Naive thymus-derived CD4-positive, alpha-beta T cell (primary cell): ENCODE measurements at regions of chr2 and their contacts with region 1.

Region 1: GRCh38 chr2:239401067-239401880 is 454 bp upstream of the HDAC4 start:
- DNase-seq: peak; percentile 98 to 100 (median 100)
- ATAC-seq: peak; percentile 92
- H3K4me3 ChIP-seq: peak overlapping the region; percentile 100
- H3K4me3 Mint-ChIP-seq: peak overlapping the region; percentile 86 to 96 (median 92)
- H3K27ac ChIP-seq: peak overlapping the region; percentile 97
- H3K27ac Mint-ChIP-seq: peak overlapping the region; percentile 96 to 99 (median 99)
- H3K4me1 ChIP-seq: peaks cover 17 to 26% of the 10 kb centered on the region in 2 donors
- H3K4me1 Mint-ChIP-seq: peaks cover 28 to 51% (median 43%) of the 10 kb centered on the region in 7 donors
- H3K27me3 ChIP-seq: no peaks in the 10 kb centered on the region
- H3K27me3 Mint-ChIP-seq: peaks cover 0 to 16% (median 0%) of the 10 kb centered on the region in 5 donors

Region 2: DNA sequence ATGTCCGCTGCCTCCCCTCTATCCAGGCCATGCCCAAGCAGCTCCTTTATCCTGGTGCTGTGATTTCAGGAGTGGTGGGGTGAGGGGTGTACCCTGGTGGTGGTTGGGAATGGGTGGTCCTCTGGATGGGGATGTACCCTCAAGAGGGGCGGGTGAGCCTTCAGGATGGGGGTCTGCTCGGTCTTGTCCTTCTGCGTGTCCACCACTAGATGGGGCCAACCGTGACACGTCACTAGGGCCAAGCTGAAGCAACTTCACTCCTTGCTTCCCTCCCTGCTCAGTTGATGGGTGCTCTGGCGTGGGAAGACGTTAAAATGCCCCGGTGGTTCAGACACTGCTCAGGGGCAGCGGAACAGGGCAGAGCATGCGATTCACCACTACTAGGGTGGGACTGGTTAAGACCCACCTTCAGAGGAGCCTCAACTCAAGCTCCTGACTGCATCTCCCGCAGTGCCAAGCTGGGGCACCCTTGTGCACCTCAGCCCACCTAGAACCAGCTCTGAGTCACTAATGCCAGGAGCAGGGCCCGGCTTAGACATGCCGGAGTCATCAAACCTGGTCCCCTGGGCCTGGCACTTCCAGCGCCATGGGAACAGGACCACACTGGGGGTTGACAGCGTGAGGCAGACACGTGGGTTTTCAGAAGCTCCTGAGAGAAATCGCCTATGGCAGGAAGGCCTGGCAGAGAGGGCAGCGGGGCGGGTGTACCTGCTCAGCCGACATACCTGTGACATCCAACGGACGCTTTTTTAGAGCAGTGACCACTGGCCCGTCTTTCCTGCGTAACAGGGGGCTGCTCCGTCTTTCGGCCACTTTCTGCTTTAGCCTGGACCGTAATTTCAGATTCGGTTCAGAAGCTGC is 257.2 kb before region 1 on chr2:
- CTCF ChIA-PET with region 1: interaction called, 5 read pairs
- POLR2A ChIA-PET with region 1: no interaction called
- intact Hi-C with region 1: loop called (anchors 1 to 10 kb)
- DNase-seq: peak in 6 of 9 donors; percentile 16 to 47 (median 40)
- ATAC-seq: peak; percentile 63
- H3K4me3 ChIP-seq: no peak overlapping the region
- H3K4me3 Mint-ChIP-seq: no peak overlapping the region
- H3K27ac ChIP-seq: no peak overlapping the region
- H3K27ac Mint-ChIP-seq: peak overlapping the region in 3 of 9 donors; percentile 25 to 41 (median 33)
- H3K4me1 ChIP-seq: no peaks in the 10 kb centered on the region
- H3K4me1 Mint-ChIP-seq: peaks cover 0 to 18% (median 3%) of the 10 kb centered on the region in 7 donors
- H3K27me3 ChIP-seq: no peaks in the 10 kb centered on the region
- H3K27me3 Mint-ChIP-seq: no peaks in the 10 kb centered on the region

Region 3: DNA sequence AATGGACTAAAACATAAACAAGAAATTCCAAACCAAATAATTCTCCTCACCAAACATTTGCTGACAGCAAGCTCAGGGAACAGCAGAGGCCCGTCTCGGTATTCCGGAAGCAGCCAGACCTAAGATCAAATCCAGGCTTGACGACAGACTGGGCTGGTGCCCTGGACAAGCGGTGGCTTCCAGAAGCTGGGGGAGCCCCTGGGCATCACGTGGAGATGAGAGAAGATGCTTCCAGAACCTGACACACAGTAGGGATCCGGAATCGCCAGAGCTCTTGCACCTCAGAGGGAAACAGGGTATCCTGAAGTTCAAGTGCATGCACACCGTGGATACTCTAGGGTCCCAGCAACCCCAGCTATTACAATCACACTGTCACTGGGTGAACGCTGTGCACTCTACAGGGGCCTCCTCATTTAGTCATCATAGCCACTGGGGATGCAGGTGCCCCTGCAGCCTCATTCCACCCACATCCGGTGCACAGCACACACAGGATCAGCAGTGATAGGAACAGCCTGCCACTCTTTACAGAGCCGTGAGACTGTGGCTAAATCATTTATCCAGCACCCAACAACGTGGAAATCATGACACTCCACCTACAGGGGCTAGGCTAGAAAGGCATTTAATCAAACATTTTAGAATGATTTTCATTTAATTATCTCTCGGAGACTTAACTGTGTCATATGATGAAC is 103.0 kb before region 1 on chr2:
- CTCF ChIA-PET with region 1: interaction called, 7 read pairs
- POLR2A ChIA-PET with region 1: interaction called, 17 read pairs
- intact Hi-C with region 1: loop called (anchors 1 kb)
- DNase-seq: peak in 8 of 9 donors; percentile 67 to 88 (median 84)
- ATAC-seq: peak; percentile 85
- H3K4me3 ChIP-seq: peak overlapping the region; percentile 66
- H3K4me3 Mint-ChIP-seq: peak overlapping the region; percentile 79 to 94 (median 90)
- H3K27ac ChIP-seq: peak overlapping the region; percentile 77
- H3K27ac Mint-ChIP-seq: peak overlapping the region; percentile 89 to 97 (median 93)
- H3K4me1 ChIP-seq: peaks cover 34 to 64% of the 10 kb centered on the region in 2 donors
- H3K4me1 Mint-ChIP-seq: peaks cover 30 to 95% (median 77%) of the 10 kb centered on the region in 7 donors
- H3K27me3 ChIP-seq: no peaks in the 10 kb centered on the region
- H3K27me3 Mint-ChIP-seq: no peaks in the 10 kb centered on the region

Region 4: DNA sequence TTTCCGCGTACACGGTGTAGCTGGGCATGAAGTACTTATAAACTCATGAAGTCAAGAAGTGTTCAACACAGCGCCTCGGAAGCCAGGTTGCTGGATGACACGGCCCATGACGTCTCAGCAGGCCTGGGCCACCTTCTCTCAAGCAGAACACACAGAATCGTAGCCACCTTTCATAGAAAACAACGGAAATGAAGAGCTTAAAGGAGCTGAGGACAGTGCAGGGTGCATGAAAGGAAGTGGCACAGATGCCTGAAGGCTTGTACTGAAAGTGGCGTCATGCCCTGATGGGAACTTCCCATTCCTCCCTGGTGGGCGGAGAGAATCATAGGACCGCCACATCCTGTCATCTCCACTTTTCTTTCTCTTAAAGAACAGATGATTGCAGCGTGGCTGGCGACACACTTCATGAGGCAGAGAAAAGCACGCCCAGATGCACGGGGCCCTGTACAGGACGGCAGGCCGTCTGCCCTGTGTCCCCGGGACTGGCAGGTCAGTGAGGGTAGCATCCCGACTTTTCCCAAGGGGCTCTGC is 31.6 kb before region 1 on chr2:
- CTCF ChIA-PET with region 1: interaction called, 5 read pairs
- POLR2A ChIA-PET with region 1: interaction called, 10 read pairs
- intact Hi-C with region 1: loop called (anchors 1 kb)
- DNase-seq: peak; percentile 39 to 95 (median 92)
- ATAC-seq: peak; percentile 96
- H3K4me3 ChIP-seq: peak overlapping the region; percentile 46
- H3K4me3 Mint-ChIP-seq: peak overlapping the region in 4 of 10 donors; percentile 81 to 87 (median 84)
- H3K27ac ChIP-seq: peak overlapping the region; percentile 96
- H3K27ac Mint-ChIP-seq: no peak overlapping the region
- H3K4me1 ChIP-seq: peaks cover 11 to 41% of the 10 kb centered on the region in 2 donors
- H3K4me1 Mint-ChIP-seq: peaks cover 0 to 22% (median 10%) of the 10 kb centered on the region in 7 donors
- H3K27me3 ChIP-seq: no peaks in the 10 kb centered on the region
- H3K27me3 Mint-ChIP-seq: no peaks in the 10 kb centered on the region

Region 5: DNA sequence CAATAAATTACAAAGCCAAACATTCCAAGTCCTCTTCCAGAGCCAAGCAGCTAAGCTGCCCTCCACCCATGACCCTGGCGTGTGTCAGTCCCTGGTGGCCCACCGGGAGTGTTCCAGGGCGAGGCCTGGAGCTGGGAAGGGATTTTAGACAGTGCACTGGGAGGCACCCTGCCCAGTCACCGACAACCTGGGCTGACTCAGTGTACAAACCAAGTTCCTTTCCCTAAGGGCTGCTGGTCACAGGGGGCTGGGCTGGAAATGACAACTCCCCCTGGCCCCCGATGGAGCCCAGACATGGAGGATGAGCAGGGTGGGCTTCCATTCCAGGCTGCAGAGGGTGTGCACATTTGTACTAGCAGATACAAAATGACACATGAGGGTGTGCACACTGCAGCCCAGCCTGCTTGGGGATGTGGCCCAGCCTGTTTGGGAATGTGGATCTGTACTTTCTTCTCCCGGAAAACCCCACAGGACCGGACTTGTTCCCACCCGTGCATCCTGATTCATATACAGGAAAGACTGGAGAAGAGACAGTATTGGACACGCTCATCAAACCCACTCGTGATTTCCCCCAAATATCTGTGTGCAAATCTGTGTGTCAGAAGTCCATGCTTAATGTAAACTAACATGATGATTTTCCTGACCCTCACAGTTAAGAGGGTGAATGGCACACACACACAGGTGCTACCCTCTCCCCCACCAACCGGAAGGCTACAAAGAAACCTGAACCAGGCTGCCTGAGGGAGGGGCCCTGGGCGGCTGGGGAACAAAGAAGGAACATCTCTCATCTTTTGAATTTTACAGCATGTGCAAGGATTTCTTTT is 565.0 kb after region 1 on chr2:
- CTCF ChIA-PET with region 1: no interaction called
- POLR2A ChIA-PET with region 1: no interaction called
- intact Hi-C with region 1: no loop called
- DNase-seq: no peak
- ATAC-seq: no peak
- H3K4me3 ChIP-seq: no peak overlapping the region
- H3K4me3 Mint-ChIP-seq: no peak overlapping the region
- H3K27ac ChIP-seq: no peak overlapping the region
- H3K27ac Mint-ChIP-seq: no peak overlapping the region
- H3K4me1 ChIP-seq: no peaks in the 10 kb centered on the region
- H3K4me1 Mint-ChIP-seq: peaks cover 0 to 19% (median 0%) of the 10 kb centered on the region in 7 donors
- H3K27me3 ChIP-seq: no peaks in the 10 kb centered on the region
- H3K27me3 Mint-ChIP-seq: no peaks in the 10 kb centered on the region

Region 6: DNA sequence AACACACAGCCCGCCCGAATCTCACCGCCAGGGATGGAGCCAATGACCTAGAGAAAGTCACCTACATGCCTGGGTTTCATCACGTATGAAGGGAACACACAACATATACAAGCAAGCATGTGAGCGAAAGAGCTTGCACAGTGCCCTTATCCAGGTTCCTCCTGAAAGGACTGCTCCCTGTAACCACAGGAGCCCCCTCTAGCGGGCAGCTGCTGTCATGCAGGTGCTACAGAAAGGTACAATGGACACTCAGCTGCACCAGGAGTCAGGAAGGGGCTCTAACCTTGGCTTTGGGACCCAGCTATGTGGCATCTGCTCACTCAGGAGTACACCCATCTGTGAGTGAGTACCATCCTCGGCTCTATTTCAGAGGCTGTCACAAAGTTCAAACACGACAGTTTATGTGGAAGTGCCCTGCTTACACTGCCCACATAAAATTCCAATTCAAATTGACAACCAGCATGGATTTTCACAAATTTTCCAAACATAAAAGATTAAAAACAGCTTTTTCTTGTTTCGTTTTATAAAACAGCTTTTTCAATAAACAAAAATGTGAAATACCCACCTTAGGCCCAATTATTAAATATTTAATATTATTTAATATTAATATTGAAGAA is 620.3 kb after region 1 on chr2:
- CTCF ChIA-PET with region 1: no interaction called
- POLR2A ChIA-PET with region 1: no interaction called
- intact Hi-C with region 1: loop called (anchors 1 kb)
- DNase-seq: peak; percentile 18 to 68 (median 51)
- ATAC-seq: peak; percentile 43
- H3K4me3 ChIP-seq: no peak overlapping the region
- H3K4me3 Mint-ChIP-seq: no peak overlapping the region
- H3K27ac ChIP-seq: no peak overlapping the region
- H3K27ac Mint-ChIP-seq: peak overlapping the region in 1 of 9 donors; percentile 32
- H3K4me1 ChIP-seq: peaks cover 8 to 15% of the 10 kb centered on the region in 2 donors
- H3K4me1 Mint-ChIP-seq: peaks cover 15 to 39% (median 35%) of the 10 kb centered on the region in 7 donors
- H3K27me3 ChIP-seq: no peaks in the 10 kb centered on the region
- H3K27me3 Mint-ChIP-seq: peaks cover 0 to 2% (median 0%) of the 10 kb centered on the region in 5 donors